ENCODE measurements at regions of chr20 and their contacts with region 1.

Region 1: GRCh38 chr20:438571-439469 is 23.5 kb downstream of the TBC1D20 start:
- DNase-seq: peak in 2 of 7 donors; percentile 15 to 25
- H3K4me3 ChIP-seq: no peak overlapping the region
- H3K27ac ChIP-seq: peak overlapping the region in 1 of 5 donors; percentile 10
- H3K4me1 ChIP-seq: peaks cover 1 to 21% of the 10 kb centered on the region in 2 donors
- H3K27me3 ChIP-seq: no peaks in the 10 kb centered on the region
- CTCF ChIP-seq: no peak
- POLR2A ChIP-seq: no peak

Region 2: GRCh38 chr20:478949-479429 is 40.2 kb after region 1 on chr20:
- intact Hi-C with region 1: loop called (anchors 5 kb)
- DNase-seq: peak in 2 of 7 donors; percentile 25 to 26
- H3K4me3 ChIP-seq: no peak overlapping the region
- H3K27ac ChIP-seq: no peak overlapping the region
- H3K4me1 ChIP-seq: peaks cover 0 to 4% of the 10 kb centered on the region in 2 donors
- H3K27me3 ChIP-seq: no peaks in the 10 kb centered on the region
- CTCF ChIP-seq: peak; percentile 55 to 69 (median 60)
- POLR2A ChIP-seq: no peak

Region 3: DNA sequence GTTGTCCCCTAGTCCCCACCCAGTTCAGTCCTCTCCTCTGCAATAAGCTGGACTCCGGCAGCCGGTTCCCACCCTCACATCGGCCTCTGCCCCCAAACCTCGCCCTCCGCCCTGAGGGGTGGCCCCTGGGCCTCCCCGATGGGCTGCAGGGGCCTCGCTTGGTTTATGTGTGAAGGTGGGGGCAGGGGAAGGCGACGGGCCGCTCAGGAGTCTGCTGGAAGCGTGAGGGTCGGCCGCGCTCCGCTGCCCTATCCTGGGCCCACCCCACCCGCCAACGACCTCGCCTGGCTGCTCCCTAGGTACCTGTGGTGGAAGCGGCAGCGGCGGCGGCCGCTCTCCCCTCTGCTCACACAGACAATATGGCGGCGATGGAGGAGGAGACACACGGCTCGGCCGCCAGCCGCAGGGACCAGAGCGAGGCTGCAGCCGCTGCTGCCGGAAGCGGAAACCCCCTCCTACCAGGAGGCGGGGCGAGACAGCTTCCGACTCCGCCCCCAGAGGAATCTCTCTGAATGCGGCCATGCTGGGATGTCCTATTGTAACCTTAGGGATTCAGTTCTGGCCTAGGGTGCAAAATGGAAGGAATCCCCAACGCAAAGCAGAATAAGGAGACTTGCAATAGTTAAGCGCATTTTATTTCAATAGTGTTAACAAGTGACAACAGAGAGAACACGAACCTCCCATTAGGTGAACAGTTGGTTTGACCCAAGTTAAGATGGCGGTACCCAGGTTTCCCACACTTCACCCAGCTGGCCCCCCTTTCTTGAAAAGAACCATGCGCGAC is 104.7 kb after region 1 on chr20 and contains the start of gene CSNK2A1:
- intact Hi-C with region 1: no loop called
- DNase-seq: peak; percentile 94 to 97 (median 95)
- H3K4me3 ChIP-seq: peak within 1 kb of the TSS; percentile 51 to 99 (median 85)
- H3K27ac ChIP-seq: peak within 1 kb of the TSS; percentile 55 to 90 (median 85)
- H3K4me1 ChIP-seq: peaks cover 21 to 33% of the 10 kb centered on the region in 2 donors
- H3K27me3 ChIP-seq: no peaks in the 10 kb centered on the region
- CTCF ChIP-seq: no peak
- POLR2A ChIP-seq: peak; percentile 79 to 94
- total RNA-seq, gene CSNK2A1: 61.9 to 146 (median 101) TPM

Measured in adrenal gland (tissue), 19 donors.